Right ventricle myocardium inferior (tissue), 1 donor: ENCODE measurements at regions of chr3 and their contacts with region 1.

Region 1: GRCh38 chr3:142976621-142977398 is 13.3 kb upstream of the PAQR9 start:
- DNase-seq: peak; percentile 91
- ATAC-seq: peak; percentile 80

Region 2: GRCh38 chr3:142850386-142851023 is 126.3 kb before region 1 on chr3:
- intact Hi-C with region 1: loop called (anchors 5 kb)
- DNase-seq: no peak
- ATAC-seq: peak; percentile 71

Region 3: DNA sequence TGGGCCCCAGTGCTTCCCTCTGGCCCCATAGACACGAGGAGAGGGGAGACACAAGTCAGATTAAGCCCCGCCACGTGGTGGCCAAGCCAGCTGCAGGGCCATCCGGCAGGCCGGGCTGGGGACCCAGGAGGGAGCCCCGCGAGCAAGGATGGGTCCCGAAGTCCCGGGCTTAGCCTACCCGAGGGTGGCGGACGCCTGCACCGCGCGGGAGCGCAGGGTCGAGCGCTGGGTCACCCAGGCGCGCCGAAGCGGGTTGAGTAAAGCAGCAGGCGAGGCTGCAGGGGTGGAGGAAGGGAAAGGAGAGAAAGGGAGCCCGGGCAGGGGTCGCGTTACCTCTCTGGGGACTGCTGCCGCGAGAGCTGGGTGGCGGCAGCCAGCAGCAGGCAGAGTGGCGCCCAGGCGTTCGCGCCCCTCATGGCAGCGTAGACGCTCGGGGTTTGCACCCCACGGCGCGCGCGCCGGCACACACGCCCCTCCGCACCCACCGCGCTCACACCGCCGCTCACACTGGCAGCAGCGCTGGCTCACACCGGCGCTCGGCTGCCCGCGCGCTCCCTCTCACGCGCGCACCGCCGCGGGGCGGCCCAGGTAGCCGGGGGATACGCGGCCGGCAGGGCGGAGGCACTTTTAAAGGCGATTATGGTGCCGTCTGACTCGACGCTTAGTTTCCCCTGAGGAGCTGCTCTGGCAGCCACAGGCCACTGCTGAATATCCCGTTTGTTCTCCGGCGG is 88.2 kb before region 1 on chr3 and contains the start of gene PCOLCE2:
- intact Hi-C with region 1: loop called (anchors 5 kb)
- DNase-seq: peak; percentile 75
- ATAC-seq: peak; percentile 78
- total RNA-seq, gene PCOLCE2: 64.1 TPM